ENCODE measurements at regions of chr6 and their contacts with region 1.

Region 1: DNA sequence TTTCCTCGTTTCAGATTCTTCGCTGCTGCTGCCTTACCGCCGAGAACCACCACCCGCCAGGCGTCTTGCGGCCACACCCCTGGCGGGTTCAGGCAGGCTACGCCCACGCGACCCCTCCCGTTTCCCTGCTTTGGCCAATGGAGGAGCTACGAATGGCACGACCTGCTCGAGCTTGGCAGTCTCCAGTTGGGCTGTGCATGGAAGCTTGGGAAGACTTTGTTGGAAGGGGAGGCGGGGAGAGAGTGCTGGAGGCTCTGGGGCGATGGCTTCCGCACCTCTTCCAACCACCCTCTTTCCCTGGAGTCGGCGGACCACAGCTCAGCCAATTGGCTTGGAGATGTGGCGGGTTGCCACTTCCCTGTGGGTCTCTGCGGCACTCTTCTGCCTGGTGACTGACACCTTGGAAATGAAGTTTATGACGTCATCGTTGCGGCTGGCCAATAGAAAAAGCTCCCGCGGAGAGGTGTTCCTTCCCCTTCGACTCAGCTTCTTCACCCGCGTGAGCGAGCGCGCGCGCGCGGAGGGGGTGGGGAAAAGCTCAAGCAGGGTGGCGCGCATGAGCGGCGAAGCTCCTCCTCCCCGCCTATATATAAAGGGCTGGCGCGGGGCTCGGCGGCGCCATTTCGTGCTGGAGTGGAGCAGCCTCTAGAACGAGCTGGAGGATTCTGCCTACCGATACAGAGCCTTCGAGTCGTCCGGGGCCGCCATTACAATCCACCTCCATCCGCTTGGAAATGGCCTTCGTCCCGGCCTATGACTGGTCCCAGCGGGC is 3.4 kb downstream of the BRD2 start:
- DNase-seq: peak; percentile 99
- ATAC-seq: peak; percentile 47
- H3K4me3 Mint-ChIP-seq: peak overlapping the region; percentile 91
- H3K27ac Mint-ChIP-seq: peak overlapping the region; percentile 99
- H3K4me1 Mint-ChIP-seq: peaks cover 44% of the 10 kb centered on the region
- H3K27me3 Mint-ChIP-seq: no peaks in the 10 kb centered on the region
- CTCF ChIP-seq: no peak

Region 2: GRCh38 chr6:32666420-32667300 is 305.1 kb before region 1 on chr6 and contains the start of gene HLA-DQB1:
- CTCF ChIA-PET with region 1: no interaction called
- POLR2A ChIA-PET with region 1: interaction called, 9 read pairs
- intact Hi-C with region 1: loop called (anchors 5 kb)
- DNase-seq: no peak
- ATAC-seq: peak; percentile 65
- H3K4me3 Mint-ChIP-seq: peak within 1 kb of the TSS; percentile 90
- H3K27ac Mint-ChIP-seq: peak within 1 kb of the TSS; percentile 94
- H3K4me1 Mint-ChIP-seq: peaks cover 65% of the 10 kb centered on the region
- H3K27me3 Mint-ChIP-seq: no peaks in the 10 kb centered on the region
- CTCF ChIP-seq: no peak
- total RNA-seq, gene HLA-DQB1: 262 and 310 TPM in 2 replicates

Region 3: GRCh38 chr6:32894080-32895005 is 77.4 kb before region 1 on chr6:
- CTCF ChIA-PET with region 1: interaction called, 7 read pairs
- POLR2A ChIA-PET with region 1: interaction called, 240 read pairs
- intact Hi-C with region 1: loop called (anchors 1 kb)
- DNase-seq: peak; percentile 96
- ATAC-seq: peak; percentile 97
- H3K4me3 Mint-ChIP-seq: peak overlapping the region; percentile 99
- H3K27ac Mint-ChIP-seq: peak overlapping the region; percentile 97
- H3K4me1 Mint-ChIP-seq: peaks cover 70% of the 10 kb centered on the region
- H3K27me3 Mint-ChIP-seq: no peaks in the 10 kb centered on the region
- CTCF ChIP-seq: no peak

Region 4: GRCh38 chr6:32952817-32953739 is 18.7 kb before region 1 on chr6 and contains the start of gene HLA-DMA:
- CTCF ChIA-PET with region 1: interaction called, 93 read pairs
- POLR2A ChIA-PET with region 1: interaction called, 1,101 read pairs
- intact Hi-C with region 1: loop called (anchors 1 kb)
- DNase-seq: peak; percentile 65
- ATAC-seq: peak; percentile 91
- H3K4me3 Mint-ChIP-seq: peak within 1 kb of the TSS; percentile 98
- H3K27ac Mint-ChIP-seq: peak within 1 kb of the TSS; percentile 97
- H3K4me1 Mint-ChIP-seq: peaks cover 85% of the 10 kb centered on the region
- H3K27me3 Mint-ChIP-seq: no peaks in the 10 kb centered on the region
- CTCF ChIP-seq: no peak
- total RNA-seq, gene HLA-DMA: 371 and 387 TPM in 2 replicates

Region 5: GRCh38 chr6:33075568-33076405 is 104.0 kb after region 1 on chr6 and contains the start of gene HLA-DPB1:
- CTCF ChIA-PET with region 1: no interaction called
- POLR2A ChIA-PET with region 1: interaction called, 57 read pairs
- intact Hi-C with region 1: no loop called
- DNase-seq: peak; percentile 42
- ATAC-seq: peak; percentile 76
- H3K4me3 Mint-ChIP-seq: peak within 1 kb of the TSS; percentile 95
- H3K27ac Mint-ChIP-seq: peak within 1 kb of the TSS; percentile 99
- H3K4me1 Mint-ChIP-seq: peaks cover 66% of the 10 kb centered on the region
- H3K27me3 Mint-ChIP-seq: no peaks in the 10 kb centered on the region
- CTCF ChIP-seq: no peak
- total RNA-seq, gene HLA-DPB1: 853 and 854 TPM in 2 replicates

Region 6: DNA sequence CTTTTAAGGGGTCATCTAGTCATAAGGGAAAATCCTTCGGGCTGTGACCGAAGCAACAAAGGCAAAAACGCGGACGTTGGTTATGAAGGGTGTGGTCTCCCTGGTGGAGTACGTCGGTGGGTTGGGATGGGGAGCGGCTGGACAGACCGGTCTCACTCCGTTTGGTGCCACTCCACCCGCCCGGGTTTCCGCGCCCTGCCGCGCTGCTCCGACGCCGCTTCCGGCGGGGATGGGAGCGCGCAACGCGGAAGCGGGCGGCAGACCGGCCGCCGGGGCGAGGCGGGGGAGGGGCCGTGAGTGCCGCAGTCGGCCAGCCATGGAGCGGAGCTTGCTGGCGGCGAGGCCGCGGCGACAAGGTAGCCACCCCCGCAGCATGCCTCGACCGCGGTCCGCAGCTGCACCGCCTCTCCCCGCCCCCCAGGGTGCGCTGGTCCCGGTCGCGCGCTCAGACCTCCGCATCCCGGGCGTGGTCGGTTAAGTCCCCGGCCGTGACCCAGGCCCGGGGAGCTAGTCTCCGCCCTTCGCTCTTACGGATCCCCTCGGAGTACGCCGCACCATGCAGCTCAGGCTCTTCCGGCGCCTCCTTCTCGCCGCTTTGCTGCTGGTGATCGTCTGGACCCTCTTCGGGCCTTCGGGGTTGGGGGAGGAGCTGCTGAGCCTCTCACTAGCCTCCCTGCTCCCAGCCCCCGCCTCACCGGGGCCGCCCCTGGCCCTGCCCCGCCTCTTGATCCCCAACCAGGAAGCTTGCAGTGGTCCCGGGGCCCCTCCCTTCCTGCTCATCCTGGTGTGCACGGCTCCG is 305.3 kb after region 1 on chr6 and contains the start of gene B3GALT4:
- CTCF ChIA-PET with region 1: no interaction called
- POLR2A ChIA-PET with region 1: interaction called, 26 read pairs
- intact Hi-C with region 1: no loop called
- DNase-seq: peak; percentile 77
- ATAC-seq: peak; percentile 68
- H3K4me3 Mint-ChIP-seq: peak within 1 kb of the TSS; percentile 92
- H3K27ac Mint-ChIP-seq: peak within 1 kb of the TSS; percentile 100
- H3K4me1 Mint-ChIP-seq: peaks cover 62% of the 10 kb centered on the region
- H3K27me3 Mint-ChIP-seq: no peaks in the 10 kb centered on the region
- CTCF ChIP-seq: no peak
- total RNA-seq, gene B3GALT4: 19.1 and 19.4 TPM in 2 replicates

Measured in activated B cell treated with CpG ODN at 0.5 μM for 24 hours (primary cell).